MCF 10A (cell line): ENCODE measurements at regions of chr12 and their contacts with region 1.

Region 1: GRCh38 chr12:91178139-91178561 is 4.5 kb downstream of the DCN start:
- DNase-seq: peak; percentile 44
- H3K4me3 Mint-ChIP-seq: no peak overlapping the region
- H3K27ac Mint-ChIP-seq: no peak overlapping the region
- H3K4me1 Mint-ChIP-seq: no peaks in the 10 kb centered on the region
- H3K27me3 Mint-ChIP-seq: peaks cover 41% of the 10 kb centered on the region
- CTCF ChIP-seq: peak; percentile 44

Region 2: GRCh38 chr12:90978117-90978770 is 199.9 kb before region 1 on chr12:
- CTCF ChIA-PET with region 1: interaction called, 46 read pairs
- POLR2A ChIA-PET with region 1: interaction called, 4 read pairs
- intact Hi-C with region 1: loop called (anchors 5 kb)
- DNase-seq: peak; percentile 63
- H3K4me3 Mint-ChIP-seq: no peak overlapping the region
- H3K27ac Mint-ChIP-seq: no peak overlapping the region
- H3K4me1 Mint-ChIP-seq: no peaks in the 10 kb centered on the region
- H3K27me3 Mint-ChIP-seq: peaks cover 15% of the 10 kb centered on the region
- CTCF ChIP-seq: peak; percentile 77

Region 3: GRCh38 chr12:91189516-91189915 is 11.4 kb after region 1 on chr12:
- CTCF ChIA-PET with region 1: interaction called, 8 read pairs
- POLR2A ChIA-PET with region 1: interaction called, 15 read pairs
- intact Hi-C with region 1: no loop called
- DNase-seq: peak; percentile 57
- H3K4me3 Mint-ChIP-seq: peak overlapping the region; percentile 25
- H3K27ac Mint-ChIP-seq: peak overlapping the region; percentile 65
- H3K4me1 Mint-ChIP-seq: peaks cover 21% of the 10 kb centered on the region
- H3K27me3 Mint-ChIP-seq: peaks cover 28% of the 10 kb centered on the region
- CTCF ChIP-seq: no peak

Region 4: DNA sequence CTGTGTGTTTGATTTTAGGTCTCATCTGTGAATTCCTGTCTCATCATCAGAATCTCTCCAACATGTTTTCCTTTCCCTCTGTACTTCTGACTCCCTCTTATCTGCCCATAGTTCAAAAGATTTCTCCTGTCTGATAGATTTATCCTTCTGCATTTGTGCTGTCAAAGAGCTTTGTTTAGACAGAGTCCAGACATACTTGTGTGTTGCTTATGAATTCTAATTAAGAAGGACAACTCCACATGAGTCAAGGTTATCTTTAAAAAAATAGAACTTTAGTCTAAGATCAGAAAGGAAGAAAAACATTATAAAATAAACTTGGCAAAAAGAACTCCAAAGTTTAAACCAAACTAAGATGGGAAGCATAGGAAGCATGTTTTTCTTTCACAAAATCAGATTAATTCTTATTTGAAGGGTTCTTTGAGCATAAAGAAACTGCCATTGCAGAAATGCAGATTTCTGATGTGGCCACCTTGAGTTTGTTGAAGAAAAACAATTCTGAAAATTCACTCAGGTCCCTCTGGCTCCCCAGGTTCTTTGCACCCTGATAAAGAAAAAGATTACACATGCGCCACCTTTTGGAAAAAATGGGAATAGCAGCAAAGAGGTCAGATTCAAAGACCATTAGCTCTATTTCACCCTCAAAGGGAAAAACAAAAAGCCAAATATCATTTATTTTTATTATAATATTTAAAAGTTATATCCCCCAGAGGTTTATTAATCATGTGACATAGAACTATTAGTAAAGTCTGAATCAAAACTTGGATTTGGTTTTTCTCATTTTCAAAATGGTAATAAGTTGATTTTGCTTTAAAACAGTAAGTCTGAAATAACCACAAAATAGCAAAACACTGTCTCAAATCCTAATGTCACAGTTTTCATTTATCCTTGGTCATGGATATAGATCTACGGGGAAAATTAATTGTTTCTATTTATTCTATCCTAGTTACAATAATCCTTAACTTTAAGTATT is 148.2 kb after region 1 on chr12:
- CTCF ChIA-PET with region 1: interaction called, 196 read pairs
- POLR2A ChIA-PET with region 1: interaction called, 27 read pairs
- intact Hi-C with region 1: loop called (anchors 1 kb)
- DNase-seq: peak; percentile 72
- H3K4me3 Mint-ChIP-seq: no peak overlapping the region
- H3K27ac Mint-ChIP-seq: no peak overlapping the region
- H3K4me1 Mint-ChIP-seq: no peaks in the 10 kb centered on the region
- H3K27me3 Mint-ChIP-seq: peaks cover 38% of the 10 kb centered on the region
- CTCF ChIP-seq: peak; percentile 67